OCI-LY7 (cell line): ENCODE measurements at regions of chr5 and their contacts with region 1.

Region 1: DNA sequence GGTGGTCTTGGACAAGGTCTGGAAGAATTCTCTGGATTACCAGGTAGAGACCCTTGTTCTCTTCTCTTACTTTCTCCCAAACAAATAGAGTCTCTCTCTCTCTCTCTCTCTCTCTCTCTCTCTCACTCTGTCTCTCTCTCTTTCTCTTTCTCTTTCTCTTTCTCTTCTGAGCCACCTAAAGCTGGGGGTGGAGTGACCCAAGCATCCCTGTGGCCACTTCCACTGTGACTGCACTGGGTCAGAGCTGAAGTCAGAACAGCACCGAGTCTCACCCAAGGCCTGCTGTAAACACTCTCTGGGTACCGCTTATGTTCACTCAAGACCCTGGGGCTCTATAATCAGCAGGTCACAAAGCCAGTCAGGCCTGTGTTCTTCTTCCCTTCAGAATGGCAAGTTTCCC is 513.7 kb downstream of the EBF1 start:
- DNase-seq: no peak
- H3K4me3 ChIP-seq: no peak overlapping the region
- H3K27ac ChIP-seq: no peak overlapping the region
- H3K4me1 ChIP-seq: peaks cover 25% of the 10 kb centered on the region
- CTCF ChIP-seq: no peak

Region 2: DNA sequence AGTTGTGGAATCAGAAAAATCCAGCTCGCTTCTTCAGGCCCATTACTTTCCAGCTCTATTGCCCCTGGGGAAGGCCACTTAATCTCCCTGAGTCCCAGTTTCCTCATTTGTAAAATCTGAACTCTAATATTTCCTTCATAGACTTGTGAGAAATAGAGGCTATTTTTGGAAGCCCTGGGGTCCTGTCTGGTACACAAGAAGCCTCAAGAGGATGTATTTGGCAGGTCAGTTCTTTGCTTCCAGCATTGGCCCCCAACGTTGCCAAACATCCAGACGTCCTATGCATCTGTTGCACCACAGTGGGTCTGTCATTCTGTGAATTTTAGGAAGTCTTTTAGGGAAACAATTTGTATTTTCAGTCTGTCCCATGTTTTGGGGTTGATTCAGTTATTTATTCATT is 12.2 kb before region 1 on chr5:
- CTCF ChIA-PET with region 1: no interaction called
- POLR2A ChIA-PET with region 1: interaction called, 10 read pairs
- intact Hi-C with region 1: no loop called
- DNase-seq: no peak
- H3K4me3 ChIP-seq: no peak overlapping the region
- H3K27ac ChIP-seq: no peak overlapping the region
- H3K4me1 ChIP-seq: peaks cover 12% of the 10 kb centered on the region
- CTCF ChIP-seq: no peak